ENCODE measurements at regions of chrX and their contacts with region 1.

Region 1: GRCh38 chrX:130028196-130028595 is 45.8 kb downstream of the BCORL1 start:
- ATAC-seq: peak in 1 of 8 experiments; percentile 16
- H3K4me3 ChIP-seq: no peak overlapping the region
- H3K27ac ChIP-seq: no peak overlapping the region
- H3K4me1 ChIP-seq: no peaks in the 10 kb centered on the region

Region 2: GRCh38 chrX:129726307-129727111 is 301.7 kb before region 1 on chrX:
- in situ Hi-C with region 1: no loop called
- ATAC-seq: peak in 7 of 8 experiments; percentile 38 to 84 (median 62)
- H3K4me3 ChIP-seq: no peak overlapping the region
- H3K27ac ChIP-seq: no peak overlapping the region
- H3K4me1 ChIP-seq: no peaks in the 10 kb centered on the region

Region 3: GRCh38 chrX:129931411-129932015 is 96.7 kb before region 1 on chrX:
- in situ Hi-C with region 1: loop called in 2 of 9 experiments (anchors 25 kb)
- ATAC-seq: peak; percentile 73 to 83 (median 82)
- H3K4me3 ChIP-seq: peak overlapping the region; percentile 46 to 74 (median 58)
- H3K27ac ChIP-seq: peak overlapping the region; percentile 86 to 95
- H3K4me1 ChIP-seq: peaks cover 0 to 2% of the 10 kb centered on the region in 2 donors